ENCODE measurements at regions of chr5 and their contacts with region 1.

Region 1: GRCh38 chr5:14644623-14645237 is 19.8 kb upstream of the OTULIN start:
- DNase-seq: no peak
- ATAC-seq: no peak
- H3K4me3 ChIP-seq: no peak overlapping the region
- H3K27ac ChIP-seq: no peak overlapping the region
- H3K4me1 ChIP-seq: peaks cover 0 to 4% (median 0%) of the 10 kb centered on the region in 12 donors
- H3K27me3 ChIP-seq: peaks cover 0 to 7% (median 0%) of the 10 kb centered on the region in 9 donors
- CTCF ChIP-seq: no peak
- POLR2A ChIP-seq: no peak

Region 2: GRCh38 chr5:13987843-13988464 is 656.8 kb before region 1 on chr5:
- intact Hi-C with region 1: loop called (anchors 5 to 10 kb)
- DNase-seq: peak in 2 of 5 donors; percentile 24 to 44
- ATAC-seq: peak in 3 of 4 donors; percentile 54 to 80 (median 67)
- H3K4me3 ChIP-seq: no peak overlapping the region
- H3K27ac ChIP-seq: no peak overlapping the region
- H3K4me1 ChIP-seq: peaks cover 0 to 6% (median 0%) of the 10 kb centered on the region in 12 donors
- H3K27me3 ChIP-seq: peaks cover 0 to 7% (median 0%) of the 10 kb centered on the region in 9 donors
- CTCF ChIP-seq: peak; percentile 62 to 93 (median 86)
- POLR2A ChIP-seq: no peak

Region 3: DNA sequence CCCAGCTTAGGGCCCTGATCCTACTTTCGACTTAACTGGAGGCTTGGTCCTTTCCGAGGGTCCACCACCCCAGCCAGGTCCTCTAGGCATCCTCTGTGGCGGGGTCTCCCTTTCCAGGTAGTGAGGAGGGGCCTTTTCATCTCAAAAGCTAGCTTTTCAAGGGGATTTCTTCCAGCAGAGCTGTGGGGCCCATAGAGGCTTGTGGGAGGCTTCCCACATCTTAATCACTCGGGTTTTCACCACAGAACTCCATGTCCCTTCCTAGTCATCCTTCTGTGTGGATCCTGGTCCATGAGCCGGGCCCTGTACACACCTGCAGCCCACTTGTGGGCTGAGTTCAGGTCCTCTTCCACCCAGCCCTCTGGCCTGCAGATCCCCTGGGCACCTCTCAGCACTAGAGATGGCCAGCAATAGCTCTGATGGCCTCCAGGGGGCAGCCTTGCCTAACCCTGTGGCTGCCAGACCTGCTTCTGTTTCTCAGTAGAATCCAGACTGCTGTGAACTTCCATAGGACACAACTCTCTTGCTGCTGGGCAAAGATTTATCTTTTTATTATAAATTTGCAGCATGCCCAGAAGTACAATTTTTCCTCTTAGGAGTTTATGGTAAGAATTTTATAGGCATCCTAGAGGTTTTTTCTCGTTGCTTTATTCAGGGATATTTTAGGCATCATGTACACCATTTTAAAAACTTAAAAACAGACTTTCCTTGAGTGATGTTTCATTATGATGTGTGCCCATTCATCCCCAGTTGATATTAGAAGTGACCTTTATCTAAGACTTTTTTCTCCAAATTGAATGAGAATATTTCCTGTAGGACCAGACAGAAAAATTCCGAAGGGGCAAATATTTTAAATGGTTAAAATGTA is 292.7 kb before region 1 on chr5:
- intact Hi-C with region 1: loop called in 6 of 10 experiments (anchors 1 to 10 kb)
- DNase-seq: peak; percentile 57 to 73 (median 63)
- ATAC-seq: peak; percentile 64 to 89 (median 86)
- H3K4me3 ChIP-seq: no peak overlapping the region
- H3K27ac ChIP-seq: no peak overlapping the region
- H3K4me1 ChIP-seq: peaks cover 0 to 43% (median 12%) of the 10 kb centered on the region in 12 donors
- H3K27me3 ChIP-seq: no peaks in the 10 kb centered on the region
- CTCF ChIP-seq: peak; percentile 92 to 99 (median 96)
- POLR2A ChIP-seq: no peak

Region 4: DNA sequence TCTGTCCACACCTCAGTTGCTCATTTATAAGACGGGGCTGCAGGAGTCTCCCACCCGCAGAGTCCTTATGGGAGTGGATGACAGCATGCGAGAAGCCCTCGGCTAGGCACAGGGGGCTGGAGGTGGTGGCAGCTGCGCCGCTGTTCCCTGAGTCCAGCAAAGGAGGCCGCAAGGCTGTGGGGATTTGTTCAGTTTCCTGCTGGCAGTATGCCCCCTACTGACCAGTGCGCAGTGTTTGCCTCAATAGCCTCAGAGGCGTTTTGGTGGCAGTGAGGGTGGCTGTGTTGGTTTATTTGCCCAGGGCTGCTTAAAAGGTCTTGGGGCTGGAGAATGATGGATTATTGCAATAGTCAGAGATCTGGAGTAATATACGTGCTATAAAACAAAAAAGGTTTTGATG is 239.5 kb before region 1 on chr5:
- intact Hi-C with region 1: loop called in 3 of 10 experiments (anchors 2 to 10 kb)
- DNase-seq: no peak
- ATAC-seq: no peak
- H3K4me3 ChIP-seq: no peak overlapping the region
- H3K27ac ChIP-seq: peak overlapping the region in 2 of 12 donors; percentile 11 to 32
- H3K4me1 ChIP-seq: peaks cover 0 to 48% (median 22%) of the 10 kb centered on the region in 12 donors
- H3K27me3 ChIP-seq: no peaks in the 10 kb centered on the region
- CTCF ChIP-seq: peak in 3 of 12 donors; percentile 23 to 31 (median 27)
- POLR2A ChIP-seq: no peak

Region 5: DNA sequence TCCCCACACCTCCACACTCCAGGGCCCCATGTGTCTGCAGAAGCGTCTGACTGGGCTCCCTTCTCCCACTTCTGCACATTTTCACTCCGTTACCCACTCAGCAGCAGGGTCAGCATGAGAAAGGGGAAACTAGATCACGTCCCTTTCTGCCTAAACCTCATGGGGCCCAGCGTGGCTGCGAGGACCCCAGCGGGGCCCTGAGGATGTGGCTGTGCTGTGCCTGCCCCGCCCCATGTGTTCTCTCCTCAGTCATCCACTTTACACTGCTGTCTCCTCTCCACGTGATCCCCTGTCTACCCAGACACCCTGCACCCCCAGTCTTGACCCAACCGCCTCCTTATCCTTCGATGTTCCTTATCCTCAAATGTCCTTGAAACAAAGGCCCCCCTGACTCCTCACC is 123.0 kb before region 1 on chr5:
- intact Hi-C with region 1: loop called in 1 of 10 experiments (anchors 10 kb)
- DNase-seq: no peak
- ATAC-seq: no peak
- H3K4me3 ChIP-seq: no peak overlapping the region
- H3K27ac ChIP-seq: no peak overlapping the region
- H3K4me1 ChIP-seq: no peaks in the 10 kb centered on the region
- H3K27me3 ChIP-seq: no peaks in the 10 kb centered on the region
- CTCF ChIP-seq: no peak
- POLR2A ChIP-seq: no peak

Region 6: DNA sequence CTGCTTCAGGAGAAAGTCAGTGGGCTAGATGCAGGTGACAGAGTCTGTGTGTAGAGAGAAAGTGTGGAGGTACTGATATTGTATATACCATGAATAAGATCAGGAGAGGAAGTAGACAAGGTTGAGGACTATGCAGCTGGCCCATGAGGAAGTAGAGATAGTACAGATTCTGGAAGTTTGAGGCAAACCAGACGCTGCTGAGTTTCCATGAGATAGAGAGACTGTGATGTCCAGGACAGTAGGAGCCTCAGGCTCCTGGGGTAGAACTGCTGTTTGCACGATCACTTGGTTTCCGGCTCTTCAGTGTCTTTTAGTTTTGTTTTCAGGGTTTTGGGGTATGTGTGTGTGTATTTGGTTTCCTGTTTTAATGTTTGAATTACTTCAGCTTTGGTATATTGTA is 49.5 kb before region 1 on chr5:
- intact Hi-C with region 1: no loop called
- DNase-seq: no peak
- ATAC-seq: peak; percentile 32 to 83 (median 72)
- H3K4me3 ChIP-seq: peak overlapping the region in 1 of 12 donors; percentile 9
- H3K27ac ChIP-seq: peak overlapping the region in 3 of 12 donors; percentile 29 to 90 (median 57)
- H3K4me1 ChIP-seq: peaks cover 0 to 76% (median 0%) of the 10 kb centered on the region in 12 donors
- H3K27me3 ChIP-seq: peaks cover 0 to 4% (median 0%) of the 10 kb centered on the region in 9 donors
- CTCF ChIP-seq: no peak
- POLR2A ChIP-seq: no peak